RWPE1 (cell line): ENCODE measurements at regions of chr17 and their contacts with region 1.

Region 1: DNA sequence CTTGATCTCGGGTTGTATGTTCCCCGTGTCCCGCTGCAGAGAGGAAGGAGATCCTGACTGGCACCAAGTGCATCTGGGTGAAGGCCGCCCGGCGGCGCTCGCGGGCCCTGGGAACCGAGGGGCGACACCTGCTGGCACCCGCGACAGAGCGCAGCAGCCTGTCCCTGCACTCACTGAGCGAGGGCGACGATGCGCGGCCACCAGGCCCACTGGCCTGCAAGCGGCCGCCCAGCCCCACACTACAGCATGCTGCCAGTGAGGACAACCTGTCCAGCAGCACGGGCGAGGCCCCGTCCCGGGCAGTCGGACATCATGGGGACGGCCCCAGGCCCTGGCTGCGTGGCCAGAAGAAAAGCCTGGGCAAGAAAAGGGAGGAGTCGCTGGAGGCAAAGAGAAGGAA is 7.5 kb downstream of the BTBD17 start:
- DNase-seq: no peak
- H3K27ac ChIP-seq: no peak overlapping the region
- CTCF ChIP-seq: 0 out of 2 replicates have a peak, but pooled peaks have one; percentile 17

Region 2: GRCh38 chr17:74513987-74514631 is 160.0 kb after region 1 on chr17:
- CTCF ChIA-PET with region 1: no interaction called
- POLR2A ChIA-PET with region 1: no interaction called
- DNase-seq: peak; percentile 36
- H3K27ac ChIP-seq: no peak overlapping the region
- CTCF ChIP-seq: no peak

Region 3: GRCh38 chr17:74597069-74597790 is 243.1 kb after region 1 on chr17:
- CTCF ChIA-PET with region 1: interaction called, 10 read pairs
- POLR2A ChIA-PET with region 1: no interaction called
- DNase-seq: no peak
- H3K27ac ChIP-seq: no peak overlapping the region
- CTCF ChIP-seq: no peak